Caco-2 (cell line): ENCODE measurements at regions of chr16 and their contacts with region 1.

Region 1: DNA sequence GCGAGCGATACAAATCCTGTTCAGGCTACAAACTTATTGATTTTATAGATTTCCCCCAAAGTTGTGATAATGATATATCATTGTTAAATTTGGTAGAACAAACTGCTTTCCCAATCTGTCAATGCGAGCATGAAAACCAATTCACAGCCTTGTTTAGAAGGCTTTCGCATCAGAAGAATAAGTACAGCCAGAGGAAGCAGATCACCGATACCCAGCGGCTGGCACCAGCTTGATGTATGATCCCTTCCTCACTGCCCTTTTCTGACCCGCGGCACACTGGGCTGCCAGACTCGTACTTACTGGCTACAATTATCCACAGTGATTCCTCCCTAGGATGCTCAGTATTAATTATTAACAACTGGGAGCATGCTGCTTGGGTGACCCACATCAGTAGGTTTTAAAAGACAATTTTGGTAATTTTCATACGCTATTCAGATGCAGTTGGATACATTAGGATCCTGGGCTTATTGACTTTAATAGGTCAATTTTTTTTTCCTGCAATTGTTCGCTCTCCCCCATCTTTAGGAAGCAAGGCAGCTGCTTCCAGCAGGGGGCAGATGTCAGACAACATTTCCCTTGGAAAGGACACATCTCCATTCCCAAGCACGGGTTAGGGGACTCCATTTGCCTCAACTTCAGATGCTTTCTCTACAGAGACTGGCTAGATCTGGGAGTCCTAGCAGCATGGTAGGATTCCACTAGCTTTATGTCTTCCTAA is 582.7 kb upstream of the PSMD7 start:
- DNase-seq: peak; percentile 51 to 55
- H3K4me3 ChIP-seq: no peak overlapping the region
- H3K4me3 Mint-ChIP-seq: no peak overlapping the region
- H3K27ac Mint-ChIP-seq: no peak overlapping the region
- H3K4me1 ChIP-seq: no peaks in the 10 kb centered on the region
- H3K4me1 Mint-ChIP-seq: no peaks in the 10 kb centered on the region
- H3K27me3 ChIP-seq: no peaks in the 10 kb centered on the region
- H3K27me3 Mint-ChIP-seq: peaks cover 35% of the 10 kb centered on the region
- CTCF ChIP-seq: peak; percentile 48 to 57

Region 2: GRCh38 chr16:73753931-73754330 is 40.0 kb after region 1 on chr16:
- CTCF ChIA-PET with region 1: no interaction called
- POLR2A ChIA-PET with region 1: no interaction called
- intact Hi-C with region 1: no loop called
- DNase-seq: no peak
- H3K4me3 ChIP-seq: no peak overlapping the region
- H3K4me3 Mint-ChIP-seq: no peak overlapping the region
- H3K27ac Mint-ChIP-seq: no peak overlapping the region
- H3K4me1 ChIP-seq: no peaks in the 10 kb centered on the region
- H3K4me1 Mint-ChIP-seq: no peaks in the 10 kb centered on the region
- H3K27me3 ChIP-seq: no peaks in the 10 kb centered on the region
- H3K27me3 Mint-ChIP-seq: peaks cover 30% of the 10 kb centered on the region
- CTCF ChIP-seq: no peak

Region 3: DNA sequence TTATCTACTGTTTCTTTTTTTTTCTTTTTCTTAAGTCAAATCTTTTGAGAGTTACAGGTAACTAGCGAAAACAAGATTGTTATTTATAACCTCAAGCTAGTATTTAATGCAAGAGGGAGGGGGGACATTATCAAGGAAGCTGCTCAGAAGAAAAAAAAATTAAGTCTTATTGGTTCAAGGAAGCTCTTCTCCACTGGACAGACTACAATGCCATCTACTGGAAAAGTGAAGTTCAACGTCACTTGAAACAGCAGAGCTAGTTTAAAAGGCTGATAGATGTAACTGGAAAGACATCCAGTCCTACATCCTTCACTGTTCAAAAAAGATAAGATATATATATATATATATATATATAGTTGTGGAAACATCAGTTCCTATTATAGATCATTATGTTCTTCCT is 164.7 kb after region 1 on chr16:
- CTCF ChIA-PET with region 1: interaction called, 7 read pairs
- POLR2A ChIA-PET with region 1: no interaction called
- intact Hi-C with region 1: loop called (anchors 1 kb)
- DNase-seq: peak in 1 of 2 experiments; percentile 50
- H3K4me3 ChIP-seq: no peak overlapping the region
- H3K4me3 Mint-ChIP-seq: no peak overlapping the region
- H3K27ac Mint-ChIP-seq: no peak overlapping the region
- H3K4me1 ChIP-seq: no peaks in the 10 kb centered on the region
- H3K4me1 Mint-ChIP-seq: no peaks in the 10 kb centered on the region
- H3K27me3 ChIP-seq: no peaks in the 10 kb centered on the region
- H3K27me3 Mint-ChIP-seq: peaks cover 15% of the 10 kb centered on the region
- CTCF ChIP-seq: peak; percentile 49 to 74

Region 4: GRCh38 chr16:74226338-74226954 is 512.5 kb after region 1 on chr16:
- CTCF ChIA-PET with region 1: no interaction called
- POLR2A ChIA-PET with region 1: no interaction called
- intact Hi-C with region 1: loop called (anchors 5 kb)
- DNase-seq: no peak
- H3K4me3 ChIP-seq: no peak overlapping the region
- H3K4me3 Mint-ChIP-seq: no peak overlapping the region
- H3K27ac Mint-ChIP-seq: no peak overlapping the region
- H3K4me1 ChIP-seq: no peaks in the 10 kb centered on the region
- H3K4me1 Mint-ChIP-seq: no peaks in the 10 kb centered on the region
- H3K27me3 ChIP-seq: peaks cover 1% of the 10 kb centered on the region; the same call in 1 of the 2 replicates
- H3K27me3 Mint-ChIP-seq: peaks cover 21% of the 10 kb centered on the region
- CTCF ChIP-seq: peak; percentile 55 to 58